Activated B cell treated with CpG ODN at 0.5 μM for 24 hours (primary cell): ENCODE measurements at regions of chr16 and their contacts with region 1.

Region 1: GRCh38 chr16:2980227-2981086 is at the start of gene PKMYT1:
- DNase-seq: peak; percentile 97
- ATAC-seq: peak; percentile 90
- H3K4me3 Mint-ChIP-seq: peak within 1 kb of the TSS; percentile 84
- H3K27ac Mint-ChIP-seq: peak within 1 kb of the TSS; percentile 78
- H3K4me1 Mint-ChIP-seq: peaks cover 27% of the 10 kb centered on the region
- H3K27me3 Mint-ChIP-seq: no peaks in the 10 kb centered on the region
- CTCF ChIP-seq: no peak
- total RNA-seq, gene PKMYT1: 3.8 and 4.3 TPM in 2 replicates

Region 2: DNA sequence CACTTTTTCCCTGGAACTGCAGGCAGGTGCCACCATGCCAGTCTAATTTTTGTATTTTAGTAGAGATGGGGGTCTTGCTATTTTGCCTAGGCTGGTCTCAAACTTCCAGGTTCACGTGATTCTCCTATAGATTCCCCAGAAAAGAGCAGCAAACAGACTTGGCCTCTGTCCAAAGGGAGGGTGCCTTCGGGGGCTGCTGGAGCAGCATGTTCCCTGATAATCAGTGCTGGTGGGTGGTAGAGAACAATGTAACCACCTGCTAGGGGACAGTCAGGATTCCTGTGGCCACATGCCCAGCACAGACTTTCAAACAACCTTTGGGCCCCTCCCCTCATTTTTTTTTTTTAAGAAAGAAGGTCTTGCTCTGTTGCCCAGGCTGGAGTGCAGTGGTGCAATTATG is 565.4 kb before region 1 on chr16:
- CTCF ChIA-PET with region 1: no interaction called
- POLR2A ChIA-PET with region 1: interaction called, 12 read pairs
- intact Hi-C with region 1: no loop called
- DNase-seq: no peak
- ATAC-seq: no peak
- H3K4me3 Mint-ChIP-seq: no peak overlapping the region
- H3K27ac Mint-ChIP-seq: no peak overlapping the region
- H3K4me1 Mint-ChIP-seq: no peaks in the 10 kb centered on the region
- H3K27me3 Mint-ChIP-seq: peaks cover 14% of the 10 kb centered on the region
- CTCF ChIP-seq: no peak

Region 3: GRCh38 chr16:2874912-2875362 is 105.5 kb before region 1 on chr16:
- CTCF ChIA-PET with region 1: no interaction called
- POLR2A ChIA-PET with region 1: no interaction called
- intact Hi-C with region 1: loop called (anchors 2 kb)
- DNase-seq: peak; percentile 51
- ATAC-seq: peak; percentile 100
- H3K4me3 Mint-ChIP-seq: no peak overlapping the region
- H3K27ac Mint-ChIP-seq: no peak overlapping the region
- H3K4me1 Mint-ChIP-seq: no peaks in the 10 kb centered on the region
- H3K27me3 Mint-ChIP-seq: peaks cover 1% of the 10 kb centered on the region
- CTCF ChIP-seq: peak; percentile 54

Region 4: GRCh38 chr16:2926650-2927646 is 53.5 kb before region 1 on chr16:
- CTCF ChIA-PET with region 1: interaction called, 3 read pairs
- POLR2A ChIA-PET with region 1: interaction called, 3 read pairs
- intact Hi-C with region 1: loop called (anchors 1 kb)
- DNase-seq: peak; percentile 67
- ATAC-seq: peak; percentile 100
- H3K4me3 Mint-ChIP-seq: no peak overlapping the region
- H3K27ac Mint-ChIP-seq: no peak overlapping the region
- H3K4me1 Mint-ChIP-seq: peaks cover 10% of the 10 kb centered on the region
- H3K27me3 Mint-ChIP-seq: no peaks in the 10 kb centered on the region
- CTCF ChIP-seq: peak; percentile 56

Region 5: DNA sequence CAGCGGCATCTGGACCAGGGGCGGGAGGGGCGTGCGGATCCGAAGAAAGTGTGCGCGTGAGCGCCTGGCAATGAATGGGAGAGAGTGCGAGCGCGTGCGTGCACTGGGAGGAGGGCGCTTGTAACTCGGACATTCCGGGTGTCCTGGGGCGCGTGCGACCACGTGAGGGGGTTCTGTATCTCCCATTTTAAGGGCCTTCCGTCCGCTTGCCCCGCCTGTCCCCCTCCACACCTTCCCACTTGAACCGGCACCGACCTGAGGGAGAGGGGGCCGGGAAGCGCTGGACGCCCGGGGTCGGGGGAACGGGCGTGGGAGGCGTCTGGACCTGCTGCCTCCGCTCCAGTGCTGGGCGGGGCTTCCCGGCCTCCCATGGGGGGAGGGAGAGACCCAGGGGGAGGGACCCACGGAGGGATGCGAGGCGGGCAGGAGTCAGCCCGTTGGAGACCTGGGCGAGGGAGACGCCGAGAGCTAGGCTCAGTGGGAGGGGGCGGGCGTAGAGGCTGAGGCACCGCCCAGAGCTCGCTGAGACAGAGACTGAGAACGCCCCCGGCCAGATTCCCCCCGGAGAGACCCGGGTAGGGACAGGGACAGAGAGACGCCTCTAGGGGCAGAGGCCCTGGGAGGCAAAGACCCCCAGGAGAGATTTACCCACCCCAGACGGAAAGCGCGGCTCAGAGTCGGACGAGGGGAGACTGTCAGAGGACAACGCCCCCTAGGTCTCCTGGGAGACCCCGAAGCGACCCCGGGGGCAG is 16.6 kb before region 1 on chr16 and contains the start of gene KREMEN2:
- CTCF ChIA-PET with region 1: no interaction called
- POLR2A ChIA-PET with region 1: interaction called, 13 read pairs
- intact Hi-C with region 1: loop called (anchors 1 kb)
- DNase-seq: peak; percentile 46
- ATAC-seq: peak; percentile 6
- H3K4me3 Mint-ChIP-seq: peak within 1 kb of the TSS; percentile 80
- H3K27ac Mint-ChIP-seq: peak within 1 kb of the TSS; percentile 41
- H3K4me1 Mint-ChIP-seq: peaks cover 38% of the 10 kb centered on the region
- H3K27me3 Mint-ChIP-seq: peaks cover 20% of the 10 kb centered on the region
- CTCF ChIP-seq: no peak
- total RNA-seq, gene KREMEN2: 1.3 and 1.7 TPM in 2 replicates

Region 6: GRCh38 chr16:2968738-2969544 is 11.5 kb before region 1 on chr16 and contains the start of gene PAQR4:
- CTCF ChIA-PET with region 1: no interaction called
- POLR2A ChIA-PET with region 1: interaction called, 13 read pairs
- intact Hi-C with region 1: loop called (anchors 1 kb)
- DNase-seq: peak; percentile 86
- ATAC-seq: peak; percentile 80
- H3K4me3 Mint-ChIP-seq: peak within 1 kb of the TSS; percentile 77
- H3K27ac Mint-ChIP-seq: peak within 1 kb of the TSS; percentile 18
- H3K4me1 Mint-ChIP-seq: peaks cover 24% of the 10 kb centered on the region
- H3K27me3 Mint-ChIP-seq: peaks cover 12% of the 10 kb centered on the region
- CTCF ChIP-seq: no peak
- total RNA-seq, gene PAQR4: 2.4 and 2.7 TPM in 2 replicates

Region 7: GRCh38 chr16:3003582-3004302 is 23.3 kb after region 1 on chr16:
- CTCF ChIA-PET with region 1: no interaction called
- POLR2A ChIA-PET with region 1: interaction called, 4 read pairs
- intact Hi-C with region 1: loop called (anchors 1 kb)
- DNase-seq: peak; percentile 87
- ATAC-seq: peak; percentile 98
- H3K4me3 Mint-ChIP-seq: peak overlapping the region; percentile 67
- H3K27ac Mint-ChIP-seq: peak overlapping the region; percentile 53
- H3K4me1 Mint-ChIP-seq: peaks cover 28% of the 10 kb centered on the region
- H3K27me3 Mint-ChIP-seq: peaks cover 11% of the 10 kb centered on the region
- CTCF ChIP-seq: no peak

Region 8: GRCh38 chr16:3106205-3106928 is 125.9 kb after region 1 on chr16:
- CTCF ChIA-PET with region 1: no interaction called
- POLR2A ChIA-PET with region 1: no interaction called
- intact Hi-C with region 1: no loop called
- DNase-seq: peak; percentile 84
- ATAC-seq: peak; percentile 96
- H3K4me3 Mint-ChIP-seq: peak overlapping the region; percentile 79
- H3K27ac Mint-ChIP-seq: peak overlapping the region; percentile 73
- H3K4me1 Mint-ChIP-seq: peaks cover 27% of the 10 kb centered on the region
- H3K27me3 Mint-ChIP-seq: peaks cover 1% of the 10 kb centered on the region
- CTCF ChIP-seq: no peak